ENCODE measurements at regions of chr4 and their contacts with region 1.

Region 1: GRCh38 chr4:56977321-56978012 is at the start of gene NOA1:
- DNase-seq: peak; percentile 98
- H3K4me3 Mint-ChIP-seq: peak within 1 kb of the TSS; percentile 99
- H3K27ac Mint-ChIP-seq: peak within 1 kb of the TSS; percentile 98
- H3K4me1 Mint-ChIP-seq: peaks cover 51% of the 10 kb centered on the region
- H3K27me3 Mint-ChIP-seq: no peaks in the 10 kb centered on the region
- total RNA-seq, gene NOA1: 21.7 to 24.7 TPM

Region 2: GRCh38 chr4:56907489-56908205 is 69.8 kb before region 1 on chr4 and contains the start of gene REST:
- CTCF ChIA-PET with region 1: interaction called, 8 read pairs
- POLR2A ChIA-PET with region 1: interaction called, 18 read pairs
- DNase-seq: peak; percentile 77
- H3K4me3 Mint-ChIP-seq: peak within 1 kb of the TSS; percentile 88
- H3K27ac Mint-ChIP-seq: peak within 1 kb of the TSS; percentile 86
- H3K4me1 Mint-ChIP-seq: peaks cover 44% of the 10 kb centered on the region
- H3K27me3 Mint-ChIP-seq: peaks cover 4% of the 10 kb centered on the region
- total RNA-seq, gene REST: 54.1 to 54.7 TPM

Region 3: GRCh38 chr4:56937262-56937661 is 40.2 kb before region 1 on chr4:
- CTCF ChIA-PET with region 1: no interaction called
- POLR2A ChIA-PET with region 1: no interaction called
- DNase-seq: no peak
- H3K4me3 Mint-ChIP-seq: no peak overlapping the region
- H3K27ac Mint-ChIP-seq: no peak overlapping the region
- H3K4me1 Mint-ChIP-seq: peaks cover 6% of the 10 kb centered on the region
- H3K27me3 Mint-ChIP-seq: no peaks in the 10 kb centered on the region